CD8-positive, alpha-beta T cell (primary cell): ENCODE measurements at regions of chr16 and their contacts with region 1.

Region 1: GRCh38 chr16:85935974-85936760 is 37.2 kb downstream of the IRF8 start:
- DNase-seq: peak; percentile 39 to 92 (median 71)
- ATAC-seq: peak; percentile 86
- H3K4me3 ChIP-seq: peak overlapping the region; percentile 25 to 43
- H3K4me3 Mint-ChIP-seq: peak overlapping the region; percentile 70
- H3K27ac ChIP-seq: peak overlapping the region; percentile 64 to 74
- H3K27ac Mint-ChIP-seq: peak overlapping the region; percentile 92
- H3K4me1 ChIP-seq: peaks cover 34% of the 10 kb centered on the region
- H3K4me1 Mint-ChIP-seq: peaks cover 39% of the 10 kb centered on the region
- H3K27me3 ChIP-seq: no peaks in the 10 kb centered on the region
- H3K27me3 Mint-ChIP-seq: no peaks in the 10 kb centered on the region
- CTCF ChIP-seq: no peak

Region 2: DNA sequence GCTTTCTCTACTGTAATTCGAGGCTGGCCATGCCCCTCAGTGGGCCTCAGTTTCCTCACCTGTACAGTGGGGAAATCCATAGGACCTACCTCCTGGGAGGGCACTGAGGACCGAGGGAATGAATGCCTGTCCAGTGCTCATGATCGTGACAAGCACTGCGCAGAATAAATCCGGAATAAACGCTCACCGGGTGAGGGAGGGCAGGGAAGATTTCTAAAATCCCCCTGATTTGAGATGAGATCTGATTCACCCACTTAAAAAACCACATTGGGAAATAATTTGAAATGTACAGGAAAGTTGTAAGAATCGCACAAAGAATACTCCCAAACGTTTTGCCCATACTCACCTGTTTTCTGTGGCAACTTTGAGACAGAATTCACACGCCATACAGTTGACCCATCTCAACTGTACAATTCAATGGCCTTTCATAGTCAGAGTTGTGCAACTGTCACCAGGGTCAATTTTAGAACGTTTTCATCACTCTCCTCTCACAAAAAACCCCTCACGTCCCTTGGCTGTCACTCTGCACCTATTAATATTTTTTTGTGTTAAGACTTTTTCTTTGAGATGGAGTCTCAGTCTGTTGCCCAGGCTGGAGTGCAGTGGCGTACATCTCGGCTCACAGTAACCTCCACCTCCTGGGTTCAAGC is 12.6 kb after region 1 on chr16:
- CTCF ChIA-PET with region 1: interaction called, 3 read pairs
- POLR2A ChIA-PET with region 1: no interaction called
- intact Hi-C with region 1: loop called in 1 of 2 experiments (anchors 1 kb)
- DNase-seq: no peak
- ATAC-seq: no peak
- H3K4me3 ChIP-seq: no peak overlapping the region
- H3K4me3 Mint-ChIP-seq: peak overlapping the region; percentile 37
- H3K27ac ChIP-seq: no peak overlapping the region
- H3K27ac Mint-ChIP-seq: no peak overlapping the region
- H3K4me1 ChIP-seq: peaks cover 23% of the 10 kb centered on the region
- H3K4me1 Mint-ChIP-seq: peaks cover 38% of the 10 kb centered on the region
- H3K27me3 ChIP-seq: no peaks in the 10 kb centered on the region
- H3K27me3 Mint-ChIP-seq: no peaks in the 10 kb centered on the region
- CTCF ChIP-seq: no peak

Region 3: DNA sequence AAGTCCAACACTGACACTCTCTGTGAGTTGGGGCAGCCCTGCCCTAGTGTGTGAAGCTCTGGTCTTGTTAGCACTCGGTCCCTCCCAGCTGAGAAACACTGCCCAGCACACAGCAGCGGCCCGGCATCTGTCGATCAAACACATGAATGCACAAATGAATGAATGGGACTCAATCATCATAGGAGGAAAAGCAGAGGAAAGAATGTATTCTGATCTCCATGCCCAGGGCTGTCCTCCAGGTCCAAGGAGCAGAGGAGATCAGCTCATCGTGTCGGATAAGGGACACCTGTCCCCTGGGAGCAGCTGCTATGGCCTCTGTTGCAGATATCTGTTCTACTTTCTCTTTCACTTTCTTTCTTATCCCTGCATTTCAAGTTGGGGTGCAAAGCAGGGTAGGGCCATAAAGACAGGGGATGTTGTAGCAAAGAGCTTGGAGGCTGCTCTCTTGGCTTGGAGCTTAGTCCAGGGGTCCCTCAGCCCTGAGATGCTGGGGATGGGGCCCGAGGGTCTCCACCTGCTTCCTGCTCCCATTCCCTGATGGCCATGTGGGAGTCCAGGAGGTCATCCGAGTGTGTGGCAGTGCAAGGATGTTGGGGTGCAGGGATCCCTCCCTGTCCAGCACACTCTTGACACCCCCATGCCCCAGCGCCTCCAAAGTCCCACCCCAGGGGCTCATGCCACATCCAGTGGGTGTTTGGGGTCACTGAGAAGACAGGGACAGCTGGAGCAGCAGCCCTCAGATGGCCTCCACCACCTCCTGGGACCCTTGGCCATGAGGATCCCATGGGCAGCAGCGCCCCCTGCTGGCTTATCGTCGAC is 51.0 kb after region 1 on chr16:
- CTCF ChIA-PET with region 1: interaction called, 7 read pairs
- POLR2A ChIA-PET with region 1: no interaction called
- intact Hi-C with region 1: loop called in 1 of 2 experiments (anchors 1 kb)
- DNase-seq: peak in 8 of 9 experiments; percentile 9 to 72 (median 43)
- ATAC-seq: no peak
- H3K4me3 ChIP-seq: no peak overlapping the region
- H3K4me3 Mint-ChIP-seq: no peak overlapping the region
- H3K27ac ChIP-seq: no peak overlapping the region
- H3K27ac Mint-ChIP-seq: no peak overlapping the region
- H3K4me1 ChIP-seq: no peaks in the 10 kb centered on the region
- H3K4me1 Mint-ChIP-seq: peaks cover 20% of the 10 kb centered on the region
- H3K27me3 ChIP-seq: no peaks in the 10 kb centered on the region
- H3K27me3 Mint-ChIP-seq: peaks cover 12% of the 10 kb centered on the region
- CTCF ChIP-seq: peak; percentile 66